PC-9 (cell line): ENCODE measurements at regions of chr14 and their contacts with region 1.

Region 1: GRCh38 chr14:102272392-102272791 is 32.6 kb downstream of the MOK start:
- DNase-seq: no peak
- H3K4me3 ChIP-seq: no peak overlapping the region
- H3K27ac ChIP-seq: no peak overlapping the region
- H3K4me1 ChIP-seq: peaks cover 9% of the 10 kb centered on the region
- H3K27me3 ChIP-seq: no peaks in the 10 kb centered on the region
- CTCF ChIP-seq: no peak

Region 2: DNA sequence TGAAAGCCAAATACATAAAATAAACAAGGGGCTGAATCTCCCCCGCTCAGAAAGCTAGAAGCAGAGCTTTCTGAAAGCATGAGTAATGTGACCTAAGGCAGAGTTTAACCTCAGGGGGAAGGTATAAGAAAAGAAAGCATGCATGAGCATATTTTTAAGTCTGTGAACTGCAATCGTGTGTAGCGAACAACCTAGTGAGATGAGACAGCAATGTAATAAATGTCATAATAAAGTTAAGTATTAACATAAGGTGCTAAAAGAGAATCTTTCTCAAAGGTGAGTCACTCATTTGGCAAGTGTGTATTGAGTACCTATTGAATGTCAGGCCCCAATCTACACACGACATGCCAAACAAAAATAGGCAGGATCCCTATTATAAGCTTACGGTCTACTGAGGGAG is 146.8 kb before region 1 on chr14:
- CTCF ChIA-PET with region 1: no interaction called
- POLR2A ChIA-PET with region 1: no interaction called
- intact Hi-C with region 1: no loop called
- DNase-seq: peak; percentile 25 to 97
- H3K4me3 ChIP-seq: peak overlapping the region; percentile 14
- H3K27ac ChIP-seq: peak overlapping the region; percentile 72
- H3K4me1 ChIP-seq: peaks cover 36% of the 10 kb centered on the region
- H3K27me3 ChIP-seq: no peaks in the 10 kb centered on the region
- CTCF ChIP-seq: no peak

Region 3: DNA sequence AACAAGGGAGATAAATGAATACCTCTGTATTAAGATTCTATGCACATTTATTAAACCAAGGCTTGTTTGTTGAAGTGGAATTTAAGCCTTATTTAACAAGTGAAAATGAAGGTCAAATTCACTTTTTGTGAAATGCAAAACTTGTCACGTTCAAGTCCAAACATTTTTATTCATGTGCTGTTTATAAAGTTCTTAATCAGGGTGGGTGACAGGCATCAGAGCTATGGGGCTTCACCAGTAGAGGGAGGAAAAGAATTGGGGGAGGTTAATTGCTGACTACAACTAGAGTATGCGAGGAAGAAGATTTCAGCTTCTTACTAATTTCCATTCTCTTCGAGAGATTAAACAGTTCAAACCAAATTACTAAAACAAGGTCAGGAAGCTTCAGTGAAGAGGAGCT is 22.9 kb after region 1 on chr14:
- CTCF ChIA-PET with region 1: no interaction called
- POLR2A ChIA-PET with region 1: interaction called, 13 read pairs
- intact Hi-C with region 1: no loop called
- DNase-seq: no peak
- H3K4me3 ChIP-seq: no peak overlapping the region
- H3K27ac ChIP-seq: peak overlapping the region; percentile 63; the same call in 1 of the 2 replicates
- H3K4me1 ChIP-seq: peaks cover 33% of the 10 kb centered on the region
- H3K27me3 ChIP-seq: no peaks in the 10 kb centered on the region
- CTCF ChIP-seq: no peak